ENCODE measurements at regions of chr1 and their contacts with region 1.

Region 1: GRCh38 chr1:111739194-111739924 is at the start of gene INKA2:
- DNase-seq: peak; percentile 72 to 86
- ATAC-seq: peak; percentile 87 to 93
- H3K4me3 ChIP-seq: peak within 1 kb of the TSS; percentile 54
- H3K27ac ChIP-seq: peak within 1 kb of the TSS; percentile 78 to 95
- H3K4me1 ChIP-seq: peaks cover 6% of the 10 kb centered on the region; the same call in 2 of the 3 replicates
- CTCF ChIP-seq: no peak
- EP300 ChIP-seq: no peak
- POLR2A ChIP-seq: peak; percentile 60
- RAD21 ChIP-seq: no peak
- polyA plus RNA-seq, gene INKA2: 1.2 TPM in 2 replicates

Region 2: GRCh38 chr1:111720274-111720976 is 18.9 kb before region 1 on chr1:
- CTCF ChIA-PET with region 1: interaction called, 47 read pairs
- POLR2A ChIA-PET with region 1: no interaction called
- DNase-seq: no peak
- ATAC-seq: no peak
- H3K4me3 ChIP-seq: no peak overlapping the region
- H3K27ac ChIP-seq: no peak overlapping the region
- H3K4me1 ChIP-seq: peaks cover 4% of the 10 kb centered on the region; the same call in 1 of the 3 replicates
- CTCF ChIP-seq: no peak
- EP300 ChIP-seq: no peak
- POLR2A ChIP-seq: no peak
- RAD21 ChIP-seq: no peak